ENCODE measurements at regions of chr5 and their contacts with region 1.

Region 1: DNA sequence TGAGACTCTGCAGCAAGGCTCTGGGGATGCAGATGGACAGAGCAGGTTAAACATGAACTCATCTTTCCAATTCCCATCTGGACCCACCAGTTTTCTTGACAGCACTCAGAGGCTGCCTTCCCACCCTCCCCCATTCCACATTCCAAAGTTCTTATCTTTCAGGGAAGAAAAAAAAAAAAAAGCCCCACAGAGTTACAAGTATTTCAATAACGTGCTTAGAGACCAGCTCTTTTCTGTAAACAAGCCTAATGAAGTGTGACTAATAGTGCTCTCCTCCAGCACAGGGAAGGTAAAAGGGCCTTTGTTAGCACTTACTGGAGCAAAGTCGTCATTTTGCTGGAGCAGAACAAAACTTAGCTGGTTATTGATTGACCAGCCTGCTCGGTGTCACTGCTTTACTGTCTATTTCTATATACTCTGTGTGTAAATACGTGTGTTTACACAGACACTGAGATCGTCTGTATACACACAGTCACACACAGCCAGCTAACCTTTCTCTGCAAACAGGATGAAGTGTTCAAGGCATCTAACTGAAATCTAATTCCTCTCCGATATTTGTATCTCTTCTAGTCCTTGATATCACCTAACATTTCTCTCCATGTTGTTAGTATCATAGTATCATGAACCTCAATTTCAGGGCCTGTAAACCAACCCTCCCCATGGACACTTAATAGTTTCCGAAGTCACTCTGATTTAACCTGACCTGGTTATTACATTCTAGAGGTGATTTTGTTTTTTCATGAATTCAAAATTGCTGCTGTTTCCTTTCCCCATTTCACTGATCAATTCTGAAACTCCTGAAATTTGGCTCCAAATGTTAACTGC is 84.9 kb downstream of the ZNF608 start:
- DNase-seq: peak; percentile 70 to 98
- H3K4me3 ChIP-seq: peak overlapping the region; percentile 29; the same call in 1 of the 2 replicates
- H3K27ac ChIP-seq: peak overlapping the region; percentile 81
- H3K4me1 ChIP-seq: peaks cover 67% of the 10 kb centered on the region
- H3K27me3 ChIP-seq: no peaks in the 10 kb centered on the region
- CTCF ChIP-seq: no peak

Region 2: GRCh38 chr5:123671042-123671441 is 990.5 kb before region 1 on chr5:
- CTCF ChIA-PET with region 1: no interaction called
- POLR2A ChIA-PET with region 1: no interaction called
- intact Hi-C with region 1: no loop called
- DNase-seq: peak in 1 of 2 experiments; percentile 31
- H3K4me3 ChIP-seq: no peak overlapping the region
- H3K27ac ChIP-seq: no peak overlapping the region
- H3K4me1 ChIP-seq: no peaks in the 10 kb centered on the region
- H3K27me3 ChIP-seq: no peaks in the 10 kb centered on the region
- CTCF ChIP-seq: peak; percentile 83

Region 3: GRCh38 chr5:124371111-124371706 is 290.3 kb before region 1 on chr5:
- CTCF ChIA-PET with region 1: no interaction called
- POLR2A ChIA-PET with region 1: no interaction called
- intact Hi-C with region 1: no loop called
- DNase-seq: no peak
- H3K4me3 ChIP-seq: no peak overlapping the region
- H3K27ac ChIP-seq: no peak overlapping the region
- H3K4me1 ChIP-seq: no peaks in the 10 kb centered on the region
- H3K27me3 ChIP-seq: no peaks in the 10 kb centered on the region
- CTCF ChIP-seq: no peak

Region 4: DNA sequence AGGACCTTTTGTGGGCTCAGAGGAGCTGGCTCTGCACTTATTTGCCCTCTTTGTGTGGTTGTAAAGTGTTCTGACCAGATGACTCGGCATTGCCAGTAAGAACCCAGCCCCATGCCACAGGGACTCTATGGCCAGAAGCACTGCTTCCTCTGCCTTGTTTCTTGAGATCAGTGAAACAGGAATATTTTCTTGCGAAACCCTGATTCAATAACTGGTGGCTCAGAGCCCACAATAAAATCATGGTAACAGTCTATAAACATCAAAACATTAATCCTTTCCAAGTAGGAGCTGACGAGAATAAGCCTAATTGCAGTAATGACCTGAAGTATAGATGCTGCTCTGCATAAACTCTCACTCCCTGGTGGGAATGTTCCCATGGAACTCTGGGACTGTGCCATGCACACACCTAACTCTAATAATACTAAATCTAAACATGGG is 259.4 kb before region 1 on chr5:
- CTCF ChIA-PET with region 1: no interaction called
- POLR2A ChIA-PET with region 1: no interaction called
- intact Hi-C with region 1: loop called (anchors 5 kb)
- DNase-seq: peak; percentile 59 to 97
- H3K4me3 ChIP-seq: peak overlapping the region; percentile 34; the same call in 1 of the 2 replicates
- H3K27ac ChIP-seq: peak overlapping the region; percentile 94
- H3K4me1 ChIP-seq: peaks cover 38% of the 10 kb centered on the region
- H3K27me3 ChIP-seq: no peaks in the 10 kb centered on the region
- CTCF ChIP-seq: no peak

Region 5: DNA sequence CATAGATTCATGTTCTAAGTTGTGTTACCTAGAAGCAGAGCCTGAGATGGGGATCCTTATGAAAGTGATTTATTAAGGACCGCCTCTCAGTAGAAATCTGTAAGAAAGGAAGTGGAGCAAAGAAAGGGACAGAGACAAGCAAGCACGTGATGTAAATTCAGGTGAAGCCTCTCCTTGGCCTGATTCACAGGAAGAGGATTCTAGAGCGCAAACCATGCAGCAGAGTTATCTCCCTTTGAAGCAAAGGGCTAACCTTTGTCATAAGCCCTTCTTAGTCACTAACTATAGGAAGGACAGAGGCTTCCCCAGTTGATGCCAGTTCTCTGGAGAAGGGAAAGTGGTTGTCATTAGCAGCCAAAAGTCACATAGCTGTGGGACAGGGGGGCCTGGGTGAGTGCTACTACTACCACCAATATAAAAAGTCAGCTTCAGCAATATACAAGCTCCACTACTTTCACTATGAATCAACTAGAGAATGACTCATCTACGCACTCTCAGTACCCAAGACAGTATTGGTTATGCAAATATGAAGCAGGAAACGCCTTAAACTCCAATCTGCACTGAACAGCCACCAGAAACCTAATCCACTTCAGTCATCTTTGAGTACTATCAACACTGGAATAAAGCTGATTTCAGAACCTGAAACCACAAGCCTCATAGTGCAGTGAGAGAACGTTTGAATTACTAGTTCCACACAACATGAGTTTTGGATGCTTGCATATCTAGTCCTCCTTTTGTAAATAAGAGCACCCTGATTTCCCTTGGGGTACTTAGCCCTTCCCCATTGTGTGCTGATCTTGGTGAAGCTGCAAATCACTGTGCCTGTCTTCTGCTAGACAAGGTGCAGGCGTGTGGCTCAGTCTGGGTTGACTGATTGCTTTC is 77.8 kb before region 1 on chr5:
- CTCF ChIA-PET with region 1: no interaction called
- POLR2A ChIA-PET with region 1: no interaction called
- intact Hi-C with region 1: loop called (anchors 5 kb)
- DNase-seq: peak; percentile 16 to 77
- H3K4me3 ChIP-seq: no peak overlapping the region
- H3K27ac ChIP-seq: peak overlapping the region; percentile 28
- H3K4me1 ChIP-seq: peaks cover 12% of the 10 kb centered on the region
- H3K27me3 ChIP-seq: no peaks in the 10 kb centered on the region
- CTCF ChIP-seq: no peak

Region 6: GRCh38 chr5:124599028-124599973 is 62.2 kb before region 1 on chr5:
- CTCF ChIA-PET with region 1: no interaction called
- POLR2A ChIA-PET with region 1: no interaction called
- intact Hi-C with region 1: loop called (anchors 1 kb)
- DNase-seq: peak; percentile 41 to 87
- H3K4me3 ChIP-seq: no peak overlapping the region
- H3K27ac ChIP-seq: peak overlapping the region; percentile 45
- H3K4me1 ChIP-seq: peaks cover 36% of the 10 kb centered on the region
- H3K27me3 ChIP-seq: no peaks in the 10 kb centered on the region
- CTCF ChIP-seq: no peak

Region 7: GRCh38 chr5:124748687-124749594 is 87.4 kb after region 1 on chr5:
- CTCF ChIA-PET with region 1: interaction called, 3 read pairs
- POLR2A ChIA-PET with region 1: interaction called, 29 read pairs
- intact Hi-C with region 1: no loop called
- DNase-seq: peak; percentile 55 to 74
- H3K4me3 ChIP-seq: peak overlapping the region; percentile 48; the same call in 1 of the 2 replicates
- H3K27ac ChIP-seq: peak overlapping the region; percentile 49
- H3K4me1 ChIP-seq: no peaks in the 10 kb centered on the region
- H3K27me3 ChIP-seq: no peaks in the 10 kb centered on the region
- CTCF ChIP-seq: no peak